IMR-90 (cell line): ENCODE measurements at regions of chr17 and their contacts with region 1.

Region 1: GRCh38 chr17:48391444-48391843 is 38.6 kb downstream of the SKAP1 start:
- DNase-seq: no peak
- ATAC-seq: no peak
- H3K4me3 ChIP-seq: no peak overlapping the region
- H3K27ac ChIP-seq: no peak overlapping the region
- H3K4me1 ChIP-seq: no peaks in the 10 kb centered on the region
- H3K27me3 ChIP-seq: peaks cover 48% of the 10 kb centered on the region
- CTCF ChIP-seq: no peak
- POLR2A ChIP-seq: no peak
- RAD21 ChIP-seq: no peak

Region 2: GRCh38 chr17:48463526-48463925 is 72.1 kb after region 1 on chr17:
- CTCF ChIA-PET with region 1: no interaction called
- POLR2A ChIA-PET with region 1: interaction called, 10 read pairs
- dilution Hi-C with region 1: no loop called
- in situ Hi-C with region 1: no loop called
- intact Hi-C with region 1: no loop called
- DNase-seq: no peak
- ATAC-seq: no peak
- H3K4me3 ChIP-seq: no peak overlapping the region
- H3K27ac ChIP-seq: no peak overlapping the region
- H3K4me1 ChIP-seq: no peaks in the 10 kb centered on the region
- H3K27me3 ChIP-seq: peaks cover 39% of the 10 kb centered on the region
- CTCF ChIP-seq: no peak
- POLR2A ChIP-seq: no peak
- RAD21 ChIP-seq: no peak